Activated T-helper 1 cell treated with anti-CD3 and anti-CD28 coated beads, Interleukin-12 subunit alpha, Interleukin-12 subunit beta, Interleukin-2, Interleukin-4 antibody, amounts not matched to agents 30 ng/mL and 10 ng/mL and 1 ng/mL, durations not matched to agents 14 hours and 24 hours and 36 hours (primary cell): ENCODE measurements at regions of chr1 and their contacts with region 1.

Region 1: GRCh38 chr1:6393400-6394187 is at the start of gene ACOT7:
- DNase-seq: peak; percentile 87
- H3K4me3 Mint-ChIP-seq: peak within 1 kb of the TSS; percentile 89
- H3K27ac Mint-ChIP-seq: peak within 1 kb of the TSS; percentile 94
- H3K4me1 Mint-ChIP-seq: peaks cover 35% of the 10 kb centered on the region
- H3K27me3 Mint-ChIP-seq: no peaks in the 10 kb centered on the region
- total RNA-seq, gene ACOT7: 124 and 126 TPM in 2 replicates

Region 2: DNA sequence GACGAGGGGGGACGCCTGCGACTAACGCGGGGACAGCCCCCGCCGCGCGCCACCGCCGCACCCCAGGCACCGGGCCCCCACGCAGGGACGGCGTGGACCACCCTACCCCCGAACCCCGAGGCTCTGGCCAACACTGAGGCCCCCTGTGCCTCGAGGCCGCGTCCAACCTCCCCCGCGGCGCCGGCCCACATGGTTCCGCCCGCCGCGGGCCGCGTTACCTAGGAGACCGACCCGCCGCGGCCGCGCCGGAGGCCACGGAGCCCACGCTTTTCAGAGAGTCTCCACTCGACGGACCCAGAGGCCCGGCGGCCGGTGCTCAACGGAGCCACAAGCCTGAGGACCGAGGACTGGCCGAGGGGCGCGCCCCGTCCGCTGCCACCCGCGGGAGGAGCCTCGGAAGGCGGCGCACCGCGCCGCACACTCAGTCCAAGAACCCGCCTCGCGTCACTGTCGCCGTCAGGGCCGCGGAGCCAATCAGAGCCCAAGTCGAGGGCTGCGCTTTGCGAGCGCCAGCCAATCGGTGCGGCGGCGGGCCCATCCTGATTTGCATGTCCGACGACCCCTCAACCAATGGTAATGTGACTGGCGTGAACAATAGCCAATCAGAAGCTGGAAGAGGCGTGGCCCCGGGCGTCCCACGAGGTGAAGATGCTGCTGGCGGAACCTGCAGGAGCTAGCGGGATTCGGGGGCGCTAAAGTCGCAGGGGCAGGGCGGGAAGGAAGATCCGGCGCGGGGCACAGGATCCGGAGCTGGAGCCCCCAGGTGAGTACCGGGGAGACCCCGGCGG is 401.4 kb before region 1 on chr1 and contains the start of gene NPHP4:
- intact Hi-C with region 1: loop called (anchors 1 kb)
- DNase-seq: peak; percentile 100
- H3K4me3 Mint-ChIP-seq: peak within 1 kb of the TSS; percentile 95
- H3K27ac Mint-ChIP-seq: peak within 1 kb of the TSS; percentile 98
- H3K4me1 Mint-ChIP-seq: peaks cover 38% of the 10 kb centered on the region
- H3K27me3 Mint-ChIP-seq: no peaks in the 10 kb centered on the region
- total RNA-seq, gene NPHP4: 18.3 and 18.6 TPM in 2 replicates

Region 3: DNA sequence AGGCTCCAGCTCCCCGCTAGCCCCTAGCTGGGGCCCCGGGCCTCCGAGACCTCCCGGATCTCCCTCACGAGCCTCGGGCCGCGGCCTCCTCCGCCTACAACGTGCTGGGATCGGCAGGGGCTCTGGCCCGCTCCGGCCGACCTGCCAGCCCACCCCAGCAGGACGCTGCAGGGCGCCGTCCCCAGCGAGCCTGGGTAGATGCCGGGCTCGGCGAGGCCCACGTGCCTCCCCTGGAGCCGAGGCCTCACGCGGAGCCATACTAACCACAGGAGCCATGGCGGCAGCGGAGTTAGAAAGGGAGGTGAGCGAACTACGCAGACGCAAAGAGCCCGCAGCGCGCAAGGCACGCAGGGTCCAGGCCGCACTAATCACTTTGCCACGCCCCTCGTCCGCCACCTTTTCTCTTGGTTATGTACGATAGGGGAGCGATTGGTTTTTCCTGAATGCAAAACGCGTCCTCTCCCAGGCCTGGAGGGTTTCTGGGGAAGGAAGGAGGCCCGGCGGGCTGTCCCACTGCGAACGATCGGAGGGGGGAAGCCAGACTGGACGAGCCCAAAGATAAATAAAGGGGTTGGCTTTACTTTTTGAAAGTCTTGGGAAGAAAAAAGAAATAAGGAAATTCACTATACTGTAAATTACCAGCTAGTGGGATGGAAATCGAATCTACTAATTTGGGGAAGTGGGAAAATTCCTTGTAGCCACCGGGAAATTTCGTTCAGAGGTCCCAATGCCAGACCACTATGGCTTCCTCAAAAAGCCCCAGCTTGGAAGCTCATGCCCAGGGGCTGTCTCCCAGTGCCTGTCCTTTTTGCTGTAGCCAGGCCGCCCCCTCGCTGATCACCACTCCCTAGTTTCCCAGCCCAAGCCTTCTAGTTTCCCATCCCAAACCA is 194.1 kb before region 1 on chr1 and contains the start of gene RPL22:
- intact Hi-C with region 1: loop called (anchors 1 kb)
- DNase-seq: peak; percentile 96
- H3K4me3 Mint-ChIP-seq: peak within 1 kb of the TSS; percentile 94
- H3K27ac Mint-ChIP-seq: peak within 1 kb of the TSS; percentile 92
- H3K4me1 Mint-ChIP-seq: peaks cover 44% of the 10 kb centered on the region
- H3K27me3 Mint-ChIP-seq: peaks cover 2% of the 10 kb centered on the region
- total RNA-seq, gene RPL22: 421 and 457 TPM in 2 replicates

Region 4: GRCh38 chr1:6259491-6260425 is 133.8 kb before region 1 on chr1:
- intact Hi-C with region 1: loop called (anchors 1 kb)
- DNase-seq: peak; percentile 80
- H3K4me3 Mint-ChIP-seq: peak overlapping the region; percentile 46
- H3K27ac Mint-ChIP-seq: no peak overlapping the region
- H3K4me1 Mint-ChIP-seq: no peaks in the 10 kb centered on the region
- H3K27me3 Mint-ChIP-seq: peaks cover 12% of the 10 kb centered on the region

Region 5: GRCh38 chr1:6359216-6360116 is 34.1 kb before region 1 on chr1:
- intact Hi-C with region 1: loop called (anchors 1 kb)
- DNase-seq: peak; percentile 57
- H3K4me3 Mint-ChIP-seq: peak overlapping the region; percentile 64
- H3K27ac Mint-ChIP-seq: peak overlapping the region; percentile 89
- H3K4me1 Mint-ChIP-seq: peaks cover 46% of the 10 kb centered on the region
- H3K27me3 Mint-ChIP-seq: no peaks in the 10 kb centered on the region

Region 6: DNA sequence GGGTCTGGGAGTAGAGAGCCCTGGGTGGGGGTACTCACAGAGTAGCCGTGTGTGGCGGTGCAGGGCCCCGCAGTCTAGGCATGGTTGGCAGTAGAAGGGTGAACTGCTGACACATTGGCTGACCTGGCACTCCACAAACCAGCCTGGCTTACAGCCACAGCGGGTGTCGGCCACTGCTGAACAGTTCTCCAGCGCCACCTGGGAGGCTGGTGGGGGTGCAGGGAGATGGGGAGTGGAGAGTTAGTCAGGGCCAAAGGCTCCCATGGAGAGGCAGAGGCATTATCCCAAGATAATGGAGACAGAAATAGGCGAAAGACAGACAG is 70.9 kb after region 1 on chr1:
- intact Hi-C with region 1: loop called (anchors 1 kb)
- DNase-seq: no peak
- H3K4me3 Mint-ChIP-seq: peak overlapping the region; percentile 99
- H3K27ac Mint-ChIP-seq: peak overlapping the region; percentile 91
- H3K4me1 Mint-ChIP-seq: peaks cover 41% of the 10 kb centered on the region
- H3K27me3 Mint-ChIP-seq: no peaks in the 10 kb centered on the region